Transverse colon (tissue), 4 donors: ENCODE measurements at regions of chr15 and their contacts with region 1.

Region 1: GRCh38 chr15:60592371-60593169 is 113.6 kb upstream of the ICE2 start:
- DNase-seq: peak; percentile 90
- H3K4me3 ChIP-seq: peak overlapping the region; percentile 64 to 86 (median 78)
- H3K27ac ChIP-seq: peak overlapping the region; percentile 88 to 93 (median 90)
- H3K4me1 ChIP-seq: peaks cover 0 to 21% (median 10%) of the 10 kb centered on the region in 4 donors
- H3K27me3 ChIP-seq: peaks cover 29% of the 10 kb centered on the region
- CTCF ChIP-seq: peak in 2 of 5 experiments; percentile 10 to 22
- EP300 ChIP-seq: no peak
- POLR2A ChIP-seq: peak; percentile 69

Region 2: DNA sequence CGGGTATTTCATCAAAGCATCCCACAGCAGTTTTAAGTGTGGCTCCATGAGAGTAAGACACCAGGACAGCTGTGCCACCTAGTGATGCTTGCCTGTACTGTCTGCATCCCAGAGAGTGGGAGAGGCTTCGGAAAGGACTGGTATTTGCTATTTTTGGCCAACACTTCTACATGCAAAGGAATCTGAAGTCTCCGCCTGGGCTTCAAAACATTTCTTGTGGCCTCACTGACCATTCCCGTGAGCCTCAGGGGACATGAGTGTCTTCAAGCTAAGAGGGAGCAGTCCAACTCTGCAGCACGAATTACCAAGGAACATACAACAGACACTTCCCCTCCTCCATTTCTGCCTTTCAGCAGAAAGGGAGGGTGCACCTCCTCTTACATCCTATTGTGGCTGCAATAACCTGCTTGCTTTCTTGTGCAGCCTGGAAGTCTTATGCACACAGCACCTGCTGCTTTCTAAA is 459.0 kb after region 1 on chr15:
- in situ Hi-C with region 1: loop called in 3 of 4 experiments (anchors 10 to 25 kb)
- intact Hi-C with region 1: loop called (anchors 2 kb)
- DNase-seq: peak; percentile 32
- H3K4me3 ChIP-seq: no peak overlapping the region
- H3K27ac ChIP-seq: peak overlapping the region in 3 of 4 donors; percentile 10 to 25 (median 15)
- H3K4me1 ChIP-seq: no peaks in the 10 kb centered on the region
- H3K27me3 ChIP-seq: no peaks in the 10 kb centered on the region
- CTCF ChIP-seq: peak; percentile 46 to 56 (median 51)
- EP300 ChIP-seq: no peak
- POLR2A ChIP-seq: no peak